Endothelial cell of umbilical vein (primary cell): ENCODE measurements at regions of chr1 and their contacts with region 1.

Region 1: GRCh38 chr1:6794164-6794563 is 8.9 kb downstream of the CAMTA1 start:
- DNase-seq: peak; percentile 71
- H3K4me3 ChIP-seq: no peak overlapping the region
- H3K27ac ChIP-seq: no peak overlapping the region
- H3K4me1 ChIP-seq: peaks cover 29% of the 10 kb centered on the region
- H3K27me3 ChIP-seq: no peaks in the 10 kb centered on the region
- CTCF ChIP-seq: peak in 1 of 2 donors; percentile 16
- POLR2A ChIP-seq: no peak

Region 2: GRCh38 chr1:6776895-6777294 is 17.3 kb before region 1 on chr1:
- CTCF ChIA-PET with region 1: no interaction called
- POLR2A ChIA-PET with region 1: no interaction called
- dilution Hi-C with region 1: no loop called
- intact Hi-C with region 1: no loop called
- DNase-seq: no peak
- H3K4me3 ChIP-seq: no peak overlapping the region
- H3K27ac ChIP-seq: no peak overlapping the region
- H3K4me1 ChIP-seq: no peaks in the 10 kb centered on the region
- H3K27me3 ChIP-seq: no peaks in the 10 kb centered on the region
- CTCF ChIP-seq: no peak
- POLR2A ChIP-seq: no peak

Region 3: GRCh38 chr1:6859415-6860343 is 65.5 kb after region 1 on chr1:
- CTCF ChIA-PET with region 1: no interaction called
- POLR2A ChIA-PET with region 1: no interaction called
- dilution Hi-C with region 1: no loop called
- intact Hi-C with region 1: loop called (anchors 1 kb)
- DNase-seq: peak; percentile 95
- H3K4me3 ChIP-seq: peak overlapping the region in 1 of 3 experiments; percentile 5
- H3K27ac ChIP-seq: peak overlapping the region; percentile 89
- H3K4me1 ChIP-seq: peaks cover 20% of the 10 kb centered on the region
- H3K27me3 ChIP-seq: no peaks in the 10 kb centered on the region
- CTCF ChIP-seq: no peak
- POLR2A ChIP-seq: no peak

Region 4: DNA sequence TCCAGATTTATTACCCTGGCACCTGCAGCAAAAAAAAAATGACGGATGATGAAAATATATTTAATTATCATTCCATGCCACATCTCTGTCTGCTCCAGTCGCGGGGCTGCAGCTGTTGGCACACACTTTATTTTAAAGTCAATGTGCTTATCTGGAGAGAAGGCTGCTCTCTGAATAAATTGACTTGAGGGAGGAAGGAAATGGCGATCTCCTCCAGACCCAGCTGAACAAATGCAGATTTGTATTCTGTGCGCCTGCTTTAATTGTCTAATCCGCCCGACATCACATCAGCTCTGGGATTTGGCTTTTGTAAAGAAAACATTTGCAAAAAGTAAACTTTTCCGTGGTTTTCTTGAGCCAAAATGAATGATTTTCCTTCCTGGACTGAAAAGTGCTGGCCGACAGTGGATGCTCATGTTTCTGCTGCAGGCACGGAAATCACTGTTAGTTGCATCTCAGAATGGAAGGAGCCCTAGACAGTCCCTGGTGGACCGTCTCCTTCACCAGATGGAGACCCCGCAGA is 141.3 kb after region 1 on chr1:
- CTCF ChIA-PET with region 1: no interaction called
- POLR2A ChIA-PET with region 1: no interaction called
- dilution Hi-C with region 1: no loop called
- intact Hi-C with region 1: loop called (anchors 1 kb)
- DNase-seq: peak; percentile 99
- H3K4me3 ChIP-seq: peak overlapping the region in 1 of 3 experiments; percentile 50
- H3K27ac ChIP-seq: peak overlapping the region; percentile 83
- H3K4me1 ChIP-seq: peaks cover 9% of the 10 kb centered on the region
- H3K27me3 ChIP-seq: peaks cover 3 to 13% of the 10 kb centered on the region in 2 experiments
- CTCF ChIP-seq: no peak
- POLR2A ChIP-seq: peak; percentile 34

Region 5: GRCh38 chr1:7042322-7043190 is 248.4 kb after region 1 on chr1:
- CTCF ChIA-PET with region 1: interaction called, 17 read pairs
- POLR2A ChIA-PET with region 1: no interaction called
- dilution Hi-C with region 1: no loop called
- intact Hi-C with region 1: no loop called
- DNase-seq: peak; percentile 31
- H3K4me3 ChIP-seq: no peak overlapping the region
- H3K27ac ChIP-seq: no peak overlapping the region
- H3K4me1 ChIP-seq: no peaks in the 10 kb centered on the region
- H3K27me3 ChIP-seq: no peaks in the 10 kb centered on the region
- CTCF ChIP-seq: peak; percentile 35 to 40
- POLR2A ChIP-seq: no peak

Region 6: GRCh38 chr1:7207875-7208646 is 413.9 kb after region 1 on chr1:
- CTCF ChIA-PET with region 1: interaction called, 13 read pairs
- POLR2A ChIA-PET with region 1: no interaction called
- dilution Hi-C with region 1: no loop called
- intact Hi-C with region 1: loop called (anchors 1 kb)
- DNase-seq: peak; percentile 59
- H3K4me3 ChIP-seq: no peak overlapping the region
- H3K27ac ChIP-seq: no peak overlapping the region
- H3K4me1 ChIP-seq: no peaks in the 10 kb centered on the region
- H3K27me3 ChIP-seq: no peaks in the 10 kb centered on the region
- CTCF ChIP-seq: peak; percentile 62 to 72
- POLR2A ChIP-seq: no peak

Region 7: GRCh38 chr1:7539769-7540175 is 745.6 kb after region 1 on chr1:
- CTCF ChIA-PET with region 1: no interaction called
- POLR2A ChIA-PET with region 1: no interaction called
- dilution Hi-C with region 1: no loop called
- intact Hi-C with region 1: loop called (anchors 10 kb)
- DNase-seq: peak; percentile 34
- H3K4me3 ChIP-seq: no peak overlapping the region
- H3K27ac ChIP-seq: no peak overlapping the region
- H3K4me1 ChIP-seq: no peaks in the 10 kb centered on the region
- H3K27me3 ChIP-seq: no peaks in the 10 kb centered on the region
- CTCF ChIP-seq: peak; percentile 48 to 62
- POLR2A ChIP-seq: no peak